ENCODE measurements at regions of chr17 and their contacts with region 1.

Region 1: GRCh38 chr17:34980681-34981537 is 597 bp downstream of the LIG3 start:
- DNase-seq: peak in 7 of 9 donors; percentile 65 to 87 (median 74)
- ATAC-seq: peak; percentile 91
- H3K4me3 ChIP-seq: peak overlapping the region; percentile 68
- H3K4me3 Mint-ChIP-seq: peak overlapping the region; percentile 87 to 97 (median 94)
- H3K27ac ChIP-seq: peak overlapping the region; percentile 99
- H3K27ac Mint-ChIP-seq: peak overlapping the region; percentile 91 to 98 (median 97)
- H3K4me1 ChIP-seq: peaks cover 17 to 26% of the 10 kb centered on the region in 2 donors
- H3K4me1 Mint-ChIP-seq: peaks cover 36 to 57% (median 53%) of the 10 kb centered on the region in 7 donors
- H3K27me3 ChIP-seq: no peaks in the 10 kb centered on the region
- H3K27me3 Mint-ChIP-seq: no peaks in the 10 kb centered on the region

Region 2: DNA sequence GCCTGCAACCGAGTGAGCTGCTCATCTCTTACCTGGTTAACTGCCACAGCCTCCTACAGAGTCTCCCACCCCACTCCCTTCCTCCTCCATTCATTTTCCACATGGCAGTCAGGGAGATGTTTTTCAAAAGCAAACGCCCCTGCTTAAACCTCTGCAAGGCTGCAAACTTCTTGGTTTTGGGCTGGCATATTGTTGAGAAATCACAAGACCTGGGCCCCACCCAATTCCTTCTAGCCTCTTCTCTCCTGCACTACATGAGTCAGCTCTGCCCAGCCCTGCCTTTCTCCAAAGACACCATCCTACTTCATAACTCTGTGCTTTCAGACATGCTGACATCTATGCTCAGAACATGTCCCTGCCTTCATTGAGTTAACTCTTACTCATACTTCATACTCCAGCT is 1853.2 kb before region 1 on chr17:
- CTCF ChIA-PET with region 1: no interaction called
- POLR2A ChIA-PET with region 1: no interaction called
- intact Hi-C with region 1: no loop called
- DNase-seq: no peak
- ATAC-seq: no peak
- H3K4me3 ChIP-seq: no peak overlapping the region
- H3K4me3 Mint-ChIP-seq: no peak overlapping the region
- H3K27ac ChIP-seq: no peak overlapping the region
- H3K27ac Mint-ChIP-seq: no peak overlapping the region
- H3K4me1 ChIP-seq: no peaks in the 10 kb centered on the region
- H3K4me1 Mint-ChIP-seq: no peaks in the 10 kb centered on the region
- H3K27me3 ChIP-seq: no peaks in the 10 kb centered on the region
- H3K27me3 Mint-ChIP-seq: peaks cover 9 to 35% (median 22%) of the 10 kb centered on the region in 5 donors

Region 3: GRCh38 chr17:34584805-34585416 is 396.0 kb before region 1 on chr17:
- CTCF ChIA-PET with region 1: interaction called, 3 read pairs
- POLR2A ChIA-PET with region 1: no interaction called
- intact Hi-C with region 1: loop called in 1 of 2 experiments (anchors 1 kb)
- DNase-seq: peak in 4 of 9 donors; percentile 21 to 35 (median 32)
- ATAC-seq: peak; percentile 51
- H3K4me3 ChIP-seq: no peak overlapping the region
- H3K4me3 Mint-ChIP-seq: no peak overlapping the region
- H3K27ac ChIP-seq: no peak overlapping the region
- H3K27ac Mint-ChIP-seq: no peak overlapping the region
- H3K4me1 ChIP-seq: peaks cover 0 to 6% of the 10 kb centered on the region in 2 donors
- H3K4me1 Mint-ChIP-seq: peaks cover 0 to 15% (median 4%) of the 10 kb centered on the region in 7 donors
- H3K27me3 ChIP-seq: peaks cover 0 to 7% of the 10 kb centered on the region in 2 donors
- H3K27me3 Mint-ChIP-seq: peaks cover 41 to 78% (median 52%) of the 10 kb centered on the region in 5 donors

Region 4: DNA sequence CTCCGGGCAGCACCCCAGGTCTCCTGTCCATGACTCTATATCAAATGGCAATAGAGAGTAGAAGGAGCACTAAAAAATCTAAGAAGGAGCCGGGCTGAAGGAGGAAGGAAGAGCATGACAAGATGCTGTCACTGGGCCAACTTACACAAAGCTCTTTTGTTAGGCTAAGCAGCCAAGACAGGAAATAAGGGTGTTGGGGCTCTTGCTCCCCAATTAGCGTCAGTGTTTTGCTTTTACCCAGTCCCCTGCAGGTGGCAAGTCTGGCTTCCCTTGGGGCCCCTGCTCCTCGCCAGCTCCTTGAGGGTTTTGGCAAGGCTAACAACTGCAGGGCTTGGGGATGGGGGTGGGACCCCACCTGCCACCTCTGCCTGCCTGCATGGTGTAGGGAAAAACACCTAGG is 140.2 kb before region 1 on chr17:
- CTCF ChIA-PET with region 1: interaction called, 3 read pairs
- POLR2A ChIA-PET with region 1: interaction called, 5 read pairs
- intact Hi-C with region 1: loop called in 1 of 2 experiments (anchors 1 kb)
- DNase-seq: peak in 7 of 9 donors; percentile 25 to 64 (median 61)
- ATAC-seq: peak; percentile 61
- H3K4me3 ChIP-seq: peak overlapping the region; percentile 17
- H3K4me3 Mint-ChIP-seq: peak overlapping the region in 7 of 10 donors; percentile 22 to 70 (median 52)
- H3K27ac ChIP-seq: peak overlapping the region; percentile 30
- H3K27ac Mint-ChIP-seq: peak overlapping the region in 7 of 9 donors; percentile 81 to 94 (median 89)
- H3K4me1 ChIP-seq: peaks cover 4 to 51% of the 10 kb centered on the region in 2 donors
- H3K4me1 Mint-ChIP-seq: peaks cover 0 to 21% (median 6%) of the 10 kb centered on the region in 7 donors
- H3K27me3 ChIP-seq: no peaks in the 10 kb centered on the region
- H3K27me3 Mint-ChIP-seq: peaks cover 0 to 6% (median 0%) of the 10 kb centered on the region in 5 donors

Region 5: DNA sequence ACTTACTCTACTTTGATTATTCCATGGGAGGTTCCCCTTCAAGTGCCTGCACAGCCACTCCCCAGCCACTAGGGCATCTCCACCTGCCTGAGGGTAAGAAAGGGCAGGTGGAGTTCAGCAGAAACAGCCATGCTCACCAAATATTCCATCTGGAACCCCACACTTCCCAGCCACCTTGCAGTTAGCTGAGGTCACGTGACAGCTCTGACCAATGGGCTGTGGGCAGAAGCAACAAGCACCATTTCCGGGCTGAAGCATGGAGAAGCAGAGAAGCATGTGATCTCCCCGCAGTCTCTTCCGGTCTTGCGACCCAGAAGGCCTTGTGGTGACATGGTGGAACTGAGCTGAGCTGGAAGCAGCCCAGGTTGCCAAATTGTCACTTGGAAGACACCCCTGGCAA is 128.3 kb before region 1 on chr17:
- CTCF ChIA-PET with region 1: no interaction called
- POLR2A ChIA-PET with region 1: no interaction called
- intact Hi-C with region 1: no loop called
- DNase-seq: no peak
- ATAC-seq: no peak
- H3K4me3 ChIP-seq: no peak overlapping the region
- H3K4me3 Mint-ChIP-seq: no peak overlapping the region
- H3K27ac ChIP-seq: no peak overlapping the region
- H3K27ac Mint-ChIP-seq: no peak overlapping the region
- H3K4me1 ChIP-seq: no peaks in the 10 kb centered on the region
- H3K4me1 Mint-ChIP-seq: peaks cover 0 to 15% (median 3%) of the 10 kb centered on the region in 7 donors
- H3K27me3 ChIP-seq: no peaks in the 10 kb centered on the region
- H3K27me3 Mint-ChIP-seq: peaks cover 0 to 3% (median 0%) of the 10 kb centered on the region in 5 donors

Region 6: GRCh38 chr17:34990921-34991365 is 10.0 kb after region 1 on chr17:
- CTCF ChIA-PET with region 1: interaction called, 4 read pairs
- POLR2A ChIA-PET with region 1: interaction called, 10 read pairs
- intact Hi-C with region 1: no loop called
- DNase-seq: no peak
- ATAC-seq: peak; percentile 10
- H3K4me3 ChIP-seq: no peak overlapping the region
- H3K4me3 Mint-ChIP-seq: no peak overlapping the region
- H3K27ac ChIP-seq: no peak overlapping the region
- H3K27ac Mint-ChIP-seq: peak overlapping the region in 1 of 9 donors; percentile 5
- H3K4me1 ChIP-seq: no peaks in the 10 kb centered on the region
- H3K4me1 Mint-ChIP-seq: peaks cover 0 to 17% (median 13%) of the 10 kb centered on the region in 7 donors
- H3K27me3 ChIP-seq: no peaks in the 10 kb centered on the region
- H3K27me3 Mint-ChIP-seq: no peaks in the 10 kb centered on the region

Region 7: GRCh38 chr17:35046740-35047283 is 65.9 kb after region 1 on chr17:
- CTCF ChIA-PET with region 1: interaction called, 3 read pairs
- POLR2A ChIA-PET with region 1: interaction called, 4 read pairs
- intact Hi-C with region 1: loop called in 1 of 2 experiments (anchors 2 kb)
- DNase-seq: peak in 8 of 9 donors; percentile 54 to 82 (median 70)
- ATAC-seq: peak; percentile 77
- H3K4me3 ChIP-seq: peak overlapping the region; percentile 45
- H3K4me3 Mint-ChIP-seq: peak overlapping the region; percentile 71 to 92 (median 84)
- H3K27ac ChIP-seq: peak overlapping the region; percentile 69
- H3K27ac Mint-ChIP-seq: peak overlapping the region; percentile 85 to 97 (median 93)
- H3K4me1 ChIP-seq: peaks cover 79 to 81% of the 10 kb centered on the region in 2 donors
- H3K4me1 Mint-ChIP-seq: peaks cover 52 to 84% (median 74%) of the 10 kb centered on the region in 7 donors
- H3K27me3 ChIP-seq: no peaks in the 10 kb centered on the region
- H3K27me3 Mint-ChIP-seq: no peaks in the 10 kb centered on the region

Region 8: GRCh38 chr17:35057332-35057915 is 76.5 kb after region 1 on chr17:
- CTCF ChIA-PET with region 1: no interaction called
- POLR2A ChIA-PET with region 1: no interaction called
- intact Hi-C with region 1: no loop called
- DNase-seq: no peak
- ATAC-seq: no peak
- H3K4me3 ChIP-seq: no peak overlapping the region
- H3K4me3 Mint-ChIP-seq: peak overlapping the region in 3 of 10 donors; percentile 24 to 63 (median 24)
- H3K27ac ChIP-seq: no peak overlapping the region
- H3K27ac Mint-ChIP-seq: peak overlapping the region in 7 of 9 donors; percentile 65 to 98 (median 84)
- H3K4me1 ChIP-seq: peaks cover 22 to 23% of the 10 kb centered on the region in 2 donors
- H3K4me1 Mint-ChIP-seq: peaks cover 48 to 88% (median 72%) of the 10 kb centered on the region in 7 donors
- H3K27me3 ChIP-seq: no peaks in the 10 kb centered on the region
- H3K27me3 Mint-ChIP-seq: no peaks in the 10 kb centered on the region

Region 9: GRCh38 chr17:35141681-35142466 is 161.0 kb after region 1 on chr17 and contains the start of gene NLE1:
- CTCF ChIA-PET with region 1: no interaction called
- POLR2A ChIA-PET with region 1: no interaction called
- intact Hi-C with region 1: no loop called
- DNase-seq: peak; percentile 79 to 94 (median 89)
- ATAC-seq: peak; percentile 100
- H3K4me3 ChIP-seq: peak within 1 kb of the TSS; percentile 79
- H3K4me3 Mint-ChIP-seq: peak within 1 kb of the TSS; percentile 77 to 88 (median 86)
- H3K27ac ChIP-seq: peak within 1 kb of the TSS; percentile 81
- H3K27ac Mint-ChIP-seq: peak within 1 kb of the TSS; percentile 66 to 90 (median 87)
- H3K4me1 ChIP-seq: peaks cover 6 to 13% of the 10 kb centered on the region in 2 donors
- H3K4me1 Mint-ChIP-seq: peaks cover 7 to 30% (median 21%) of the 10 kb centered on the region in 7 donors
- H3K27me3 ChIP-seq: no peaks in the 10 kb centered on the region
- H3K27me3 Mint-ChIP-seq: no peaks in the 10 kb centered on the region
- total RNA-seq, gene NLE1: 10.0 to 29.4 (median 21.8) TPM

Region 10: DNA sequence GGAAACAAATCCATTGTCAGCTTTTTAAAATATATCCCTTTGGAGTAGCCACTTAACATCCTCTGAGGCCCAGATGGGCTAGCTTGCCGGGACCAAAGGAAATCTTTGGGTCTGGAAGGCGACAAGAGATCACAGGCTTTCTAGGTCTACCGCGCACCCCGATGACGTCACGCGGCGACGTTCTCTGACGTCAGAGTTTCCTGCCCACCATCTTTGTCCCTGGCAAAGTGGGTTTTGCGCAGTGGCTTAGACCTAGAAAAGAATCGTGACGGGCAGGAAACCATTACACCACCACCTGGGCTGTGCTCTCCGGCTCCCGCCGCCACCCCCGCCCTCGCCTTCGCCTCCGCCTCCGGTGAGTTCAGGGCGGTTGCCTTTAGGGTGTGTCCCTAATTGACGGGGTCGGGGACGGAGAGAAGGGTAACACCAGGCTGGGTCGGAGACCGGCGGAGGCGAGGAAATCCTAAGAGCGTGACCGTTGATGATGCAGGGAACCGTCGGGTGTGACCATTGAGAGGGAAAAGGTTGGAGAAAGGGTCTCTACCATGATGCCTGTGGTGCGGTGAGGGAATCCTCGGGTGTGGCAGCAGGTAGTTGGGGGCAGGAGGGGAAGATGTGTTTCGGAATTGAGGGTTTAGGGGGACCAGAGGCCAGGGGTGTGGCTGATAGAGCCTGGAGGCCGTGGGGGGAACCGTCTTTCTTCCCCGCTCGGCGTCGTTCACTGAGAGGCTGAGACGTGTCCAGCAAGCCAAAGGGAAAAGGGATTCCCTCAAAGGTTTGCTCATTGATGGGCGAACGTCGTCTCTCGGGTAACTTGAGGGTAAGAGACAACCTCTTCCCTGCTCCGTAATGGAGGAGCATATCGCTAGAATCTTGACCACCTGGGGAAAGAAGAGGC is 606.4 kb after region 1 on chr17 and contains the start of gene AP2B1:
- CTCF ChIA-PET with region 1: no interaction called
- POLR2A ChIA-PET with region 1: interaction called, 4 read pairs
- intact Hi-C with region 1: loop called (anchors 1 kb)
- DNase-seq: peak; percentile 96 to 100 (median 98)
- ATAC-seq: peak; percentile 99
- H3K4me3 ChIP-seq: peak within 1 kb of the TSS; percentile 85
- H3K4me3 Mint-ChIP-seq: peak within 1 kb of the TSS; percentile 92 to 99 (median 97)
- H3K27ac ChIP-seq: peak within 1 kb of the TSS; percentile 91
- H3K27ac Mint-ChIP-seq: peak within 1 kb of the TSS; percentile 95 to 99 (median 99)
- H3K4me1 ChIP-seq: peaks cover 13 to 17% of the 10 kb centered on the region in 2 donors
- H3K4me1 Mint-ChIP-seq: peaks cover 28 to 45% (median 38%) of the 10 kb centered on the region in 7 donors
- H3K27me3 ChIP-seq: no peaks in the 10 kb centered on the region
- H3K27me3 Mint-ChIP-seq: peaks cover 0 to 12% (median 0%) of the 10 kb centered on the region in 5 donors
- total RNA-seq, gene AP2B1: 84.7 to 197 (median 136) TPM